Mammary epithelial cell (primary cell): ENCODE measurements at regions of chr3 and their contacts with region 1.

Region 1: DNA sequence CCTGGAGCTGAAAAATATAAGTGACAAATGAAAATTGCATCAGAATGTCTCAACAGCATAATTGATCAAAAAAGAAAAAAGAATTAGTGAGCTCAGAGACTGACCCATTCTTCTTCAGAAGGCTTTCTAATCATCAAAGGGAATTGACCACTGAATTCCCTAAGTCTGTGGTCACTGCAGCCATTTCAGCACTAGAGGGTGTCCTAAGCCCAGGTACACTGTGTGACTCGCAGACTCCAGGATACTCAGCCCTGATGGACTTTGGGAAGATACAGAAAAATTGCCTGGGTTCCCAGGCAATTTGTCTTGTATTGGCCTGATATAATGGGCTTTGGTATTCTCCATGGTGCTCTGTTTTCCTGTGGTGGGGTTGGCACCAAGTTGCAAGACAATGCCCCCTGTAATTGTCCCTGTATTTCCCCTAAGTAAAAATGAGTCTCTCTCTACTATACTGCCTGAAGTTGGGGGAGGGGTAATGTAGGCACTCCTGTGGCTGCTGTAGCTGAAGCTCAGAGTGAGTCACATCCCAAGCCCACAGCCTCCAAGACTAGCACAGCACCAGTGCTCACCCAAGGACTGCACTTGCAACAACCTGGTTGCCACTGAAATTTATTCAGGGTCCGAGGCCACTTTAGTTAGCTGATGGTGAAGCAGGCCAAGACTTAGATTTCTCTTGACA is 256.0 kb upstream of the STAC start:
- DNase-seq: peak; percentile 65
- H3K4me3 ChIP-seq: no peak overlapping the region
- H3K27ac ChIP-seq: no peak overlapping the region
- H3K4me1 ChIP-seq: no peaks in the 10 kb centered on the region
- H3K27me3 ChIP-seq: no peaks in the 10 kb centered on the region
- CTCF ChIP-seq: peak; percentile 92 to 96

Region 2: DNA sequence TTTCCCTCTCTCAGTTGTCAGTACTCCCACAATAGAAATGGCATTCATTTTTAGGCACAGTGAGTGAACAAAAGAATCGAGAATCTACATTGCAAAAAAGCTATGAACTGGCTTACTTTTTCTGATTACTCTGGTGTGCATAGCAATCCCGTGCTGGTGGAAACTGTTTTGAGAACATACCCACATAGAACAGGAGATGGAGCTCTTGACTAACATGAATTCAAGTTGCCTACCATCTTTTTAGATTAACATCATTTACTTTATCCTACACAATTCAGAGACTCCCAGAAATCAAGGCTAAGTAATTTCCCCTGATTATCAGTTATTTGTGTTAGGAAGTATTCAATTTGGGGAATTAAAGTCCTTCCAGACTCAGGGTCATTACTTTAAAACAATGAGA is 158.3 kb before region 1 on chr3:
- CTCF ChIA-PET with region 1: no interaction called
- dilution Hi-C with region 1: no loop called
- in situ Hi-C with region 1: no loop called
- intact Hi-C with region 1: loop called (anchors 5 kb)
- DNase-seq: peak; percentile 14
- H3K4me3 ChIP-seq: no peak overlapping the region
- H3K27ac ChIP-seq: no peak overlapping the region
- H3K4me1 ChIP-seq: no peaks in the 10 kb centered on the region
- H3K27me3 ChIP-seq: peaks cover 5% of the 10 kb centered on the region
- CTCF ChIP-seq: peak; percentile 39 to 62

Region 3: GRCh38 chr3:36362967-36363366 is 238.7 kb after region 1 on chr3:
- CTCF ChIA-PET with region 1: no interaction called
- dilution Hi-C with region 1: no loop called
- in situ Hi-C with region 1: no loop called
- intact Hi-C with region 1: loop called (anchors 2 kb)
- DNase-seq: peak; percentile 81
- H3K4me3 ChIP-seq: no peak overlapping the region
- H3K27ac ChIP-seq: peak overlapping the region; percentile 38
- H3K4me1 ChIP-seq: peaks cover 23% of the 10 kb centered on the region
- H3K27me3 ChIP-seq: no peaks in the 10 kb centered on the region
- CTCF ChIP-seq: no peak

Region 4: DNA sequence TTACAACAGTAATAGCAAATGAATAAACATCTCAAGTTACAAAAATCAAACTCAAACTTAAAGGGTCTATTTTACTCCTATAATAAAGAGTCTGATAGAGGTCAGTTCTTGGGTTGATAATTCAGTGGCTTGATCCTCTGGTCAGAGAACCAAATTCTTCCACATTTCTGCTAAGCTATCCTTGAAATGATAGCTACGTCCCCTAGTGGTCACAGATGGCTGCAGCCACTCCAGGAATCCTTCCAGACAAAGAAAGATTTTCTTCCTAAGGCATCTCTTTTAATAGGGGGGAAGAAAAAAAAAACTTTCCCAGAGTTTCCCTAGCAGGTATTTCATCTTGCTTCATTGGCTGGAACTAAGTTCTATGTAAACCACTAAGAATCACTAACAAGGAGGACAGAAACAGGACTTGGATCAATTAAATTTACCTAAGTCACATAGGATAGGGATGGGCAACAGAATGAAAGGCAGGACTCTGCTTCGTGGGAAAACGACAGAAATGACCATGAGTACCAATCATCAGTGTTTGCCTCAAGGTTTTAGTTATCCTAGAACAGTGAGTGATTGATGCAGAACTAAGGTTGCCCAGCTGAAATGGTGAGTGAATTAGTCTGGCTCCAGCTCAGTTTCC is 416.7 kb after region 1 on chr3:
- CTCF ChIA-PET with region 1: interaction called, 3 read pairs
- dilution Hi-C with region 1: no loop called
- in situ Hi-C with region 1: loop called (anchors 10 kb)
- intact Hi-C with region 1: loop called (anchors 1 kb)
- DNase-seq: peak; percentile 11
- H3K4me3 ChIP-seq: no peak overlapping the region
- H3K27ac ChIP-seq: no peak overlapping the region
- H3K4me1 ChIP-seq: no peaks in the 10 kb centered on the region
- H3K27me3 ChIP-seq: no peaks in the 10 kb centered on the region
- CTCF ChIP-seq: peak; percentile 97 to 99

Region 5: GRCh38 chr3:36591959-36592358 is 467.7 kb after region 1 on chr3:
- CTCF ChIA-PET with region 1: no interaction called
- dilution Hi-C with region 1: no loop called
- in situ Hi-C with region 1: no loop called
- intact Hi-C with region 1: loop called (anchors 1 kb)
- DNase-seq: peak; percentile 16
- H3K4me3 ChIP-seq: no peak overlapping the region
- H3K27ac ChIP-seq: no peak overlapping the region
- H3K4me1 ChIP-seq: no peaks in the 10 kb centered on the region
- H3K27me3 ChIP-seq: no peaks in the 10 kb centered on the region
- CTCF ChIP-seq: peak in 1 of 2 donors; percentile 59

Region 6: GRCh38 chr3:36707623-36708409 is 583.6 kb after region 1 on chr3:
- CTCF ChIA-PET with region 1: no interaction called
- dilution Hi-C with region 1: no loop called
- in situ Hi-C with region 1: loop called (anchors 5 to 10 kb)
- intact Hi-C with region 1: no loop called
- DNase-seq: peak; percentile 60
- H3K4me3 ChIP-seq: no peak overlapping the region
- H3K27ac ChIP-seq: no peak overlapping the region
- H3K4me1 ChIP-seq: peaks cover 9% of the 10 kb centered on the region
- H3K27me3 ChIP-seq: no peaks in the 10 kb centered on the region
- CTCF ChIP-seq: peak; percentile 52 to 62